ENCODE measurements at regions of chr7 and their contacts with region 1.

Region 1: DNA sequence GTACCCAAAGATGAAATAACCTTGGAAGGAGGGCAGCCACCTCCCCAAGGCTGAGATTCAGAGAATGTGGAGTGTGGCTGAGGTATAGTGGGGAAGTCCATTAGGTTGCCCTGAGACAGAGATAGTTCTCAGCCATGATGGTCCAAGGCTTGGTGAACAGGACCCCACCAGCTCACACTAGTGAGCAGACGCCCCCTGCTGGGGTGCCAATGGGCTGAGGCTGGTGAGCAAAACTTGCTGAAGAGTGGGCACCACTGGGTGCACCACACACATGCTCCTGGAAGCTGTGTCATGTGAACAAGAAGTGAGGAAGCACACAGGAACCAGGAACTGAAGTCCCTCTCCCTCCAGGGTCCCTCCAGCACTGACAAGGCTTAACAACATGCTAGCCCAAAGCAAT is 8.9 kb downstream of the FBXL13 start:
- DNase-seq: peak; percentile 62
- ATAC-seq: peak; percentile 63
- H3K4me3 Mint-ChIP-seq: no peak overlapping the region
- H3K27ac Mint-ChIP-seq: no peak overlapping the region
- H3K4me1 Mint-ChIP-seq: peaks cover 7% of the 10 kb centered on the region; the same call in 1 of the 2 replicates
- H3K27me3 Mint-ChIP-seq: peaks cover 3% of the 10 kb centered on the region; the same call in 1 of the 2 replicates
- CTCF ChIP-seq: no peak

Region 2: GRCh38 chr7:103037476-103037822 is 28.2 kb before region 1 on chr7:
- CTCF ChIA-PET with region 1: interaction called, 14 read pairs
- POLR2A ChIA-PET with region 1: no interaction called
- DNase-seq: no peak
- ATAC-seq: no peak
- H3K4me3 Mint-ChIP-seq: no peak overlapping the region
- H3K27ac Mint-ChIP-seq: no peak overlapping the region
- H3K4me1 Mint-ChIP-seq: peaks cover 5% of the 10 kb centered on the region
- H3K27me3 Mint-ChIP-seq: peaks cover 1% of the 10 kb centered on the region
- CTCF ChIP-seq: no peak

Region 3: GRCh38 chr7:103094102-103094501 is 28.4 kb after region 1 on chr7:
- CTCF ChIA-PET with region 1: no interaction called
- POLR2A ChIA-PET with region 1: no interaction called
- DNase-seq: no peak
- ATAC-seq: no peak
- H3K4me3 Mint-ChIP-seq: no peak overlapping the region
- H3K27ac Mint-ChIP-seq: no peak overlapping the region
- H3K4me1 Mint-ChIP-seq: no peaks in the 10 kb centered on the region
- H3K27me3 Mint-ChIP-seq: no peaks in the 10 kb centered on the region
- CTCF ChIP-seq: no peak

Region 4: DNA sequence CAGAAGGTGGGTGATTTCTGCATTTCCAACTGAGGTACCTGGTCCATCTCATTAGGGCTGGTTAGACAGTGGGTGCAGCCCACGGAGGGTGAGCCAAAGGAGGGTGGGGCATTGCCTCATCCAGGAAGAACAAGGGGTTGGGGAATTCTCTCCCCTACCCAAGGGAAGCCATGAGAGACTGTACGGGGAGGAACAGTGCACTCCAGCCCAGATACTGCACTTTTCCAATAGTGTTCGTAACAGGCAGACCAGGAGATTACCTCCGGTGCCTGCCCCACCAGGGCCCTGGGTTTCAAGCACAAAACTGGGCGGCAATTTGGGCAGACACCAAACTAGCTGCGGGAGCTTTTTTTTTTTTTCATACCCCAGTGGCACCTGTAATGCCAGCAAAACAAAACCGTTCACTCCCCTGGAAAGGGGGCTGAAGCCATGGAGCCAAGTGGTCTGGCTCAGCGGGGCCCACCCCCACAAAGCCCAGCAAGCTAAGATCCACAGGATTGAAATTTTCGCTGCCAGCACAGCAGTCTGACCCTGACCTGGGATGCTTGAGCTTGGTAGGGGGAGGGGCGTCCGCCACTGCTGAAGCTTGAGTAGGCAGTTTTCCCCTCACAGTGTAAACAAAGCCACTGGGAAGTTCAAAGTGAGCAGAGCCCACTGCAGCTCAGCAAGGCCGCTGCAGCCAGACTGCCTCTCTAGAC is 40.5 kb after region 1 on chr7:
- CTCF ChIA-PET with region 1: interaction called, 11 read pairs
- POLR2A ChIA-PET with region 1: no interaction called
- DNase-seq: peak; percentile 71
- ATAC-seq: peak; percentile 90
- H3K4me3 Mint-ChIP-seq: no peak overlapping the region
- H3K27ac Mint-ChIP-seq: no peak overlapping the region; the same call in 1 of the 2 replicates
- H3K4me1 Mint-ChIP-seq: peaks cover 13% of the 10 kb centered on the region
- H3K27me3 Mint-ChIP-seq: no peaks in the 10 kb centered on the region
- CTCF ChIP-seq: no peak

Measured in WTC11 (cell line).